ENCODE measurements at regions of chr4 and their contacts with region 1.

Region 1: GRCh38 chr4:3106339-3107186 is 32.1 kb downstream of the HTT start:
- DNase-seq: peak; percentile 96
- H3K4me3 Mint-ChIP-seq: no peak overlapping the region
- H3K27ac Mint-ChIP-seq: peak overlapping the region; percentile 7
- H3K4me1 Mint-ChIP-seq: peaks cover 13% of the 10 kb centered on the region
- H3K27me3 Mint-ChIP-seq: no peaks in the 10 kb centered on the region

Region 2: GRCh38 chr4:3047464-3048286 is 58.9 kb before region 1 on chr4:
- intact Hi-C with region 1: loop called (anchors 1 kb)
- DNase-seq: peak; percentile 95
- H3K4me3 Mint-ChIP-seq: peak overlapping the region; percentile 60
- H3K27ac Mint-ChIP-seq: peak overlapping the region; percentile 68
- H3K4me1 Mint-ChIP-seq: peaks cover 38% of the 10 kb centered on the region
- H3K27me3 Mint-ChIP-seq: peaks cover 10% of the 10 kb centered on the region

Region 3: DNA sequence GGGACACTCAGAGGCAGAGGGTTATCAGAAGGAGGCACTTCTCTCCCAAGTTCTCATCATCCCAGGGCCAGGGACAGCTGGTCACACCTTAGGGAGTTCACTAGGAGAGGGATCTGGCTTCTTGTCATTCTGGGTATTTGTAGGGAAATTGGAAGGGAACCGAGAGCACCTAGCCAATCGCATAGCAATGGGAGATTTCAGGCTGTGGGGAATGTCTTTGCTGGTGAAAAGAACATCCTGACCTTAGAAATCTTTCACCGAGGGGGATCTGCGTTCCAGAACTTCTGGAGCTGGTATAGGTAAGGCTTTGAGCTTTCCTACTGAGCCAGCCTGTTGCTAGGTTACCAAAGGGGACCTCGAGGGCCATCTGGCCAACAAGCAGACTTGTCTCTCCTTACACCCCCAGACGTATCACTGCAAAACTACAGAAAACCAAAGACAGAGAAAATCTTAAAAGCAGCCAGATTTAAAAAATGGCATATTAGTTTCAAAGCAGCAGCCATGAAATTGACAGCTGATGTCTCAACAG is 39.0 kb before region 1 on chr4:
- intact Hi-C with region 1: no loop called
- DNase-seq: no peak
- H3K4me3 Mint-ChIP-seq: no peak overlapping the region
- H3K27ac Mint-ChIP-seq: no peak overlapping the region
- H3K4me1 Mint-ChIP-seq: no peaks in the 10 kb centered on the region
- H3K27me3 Mint-ChIP-seq: peaks cover 7% of the 10 kb centered on the region

Region 4: GRCh38 chr4:3085948-3086655 is 20.5 kb before region 1 on chr4:
- intact Hi-C with region 1: loop called (anchors 1 kb)
- DNase-seq: no peak
- H3K4me3 Mint-ChIP-seq: no peak overlapping the region
- H3K27ac Mint-ChIP-seq: peak overlapping the region; percentile 70
- H3K4me1 Mint-ChIP-seq: peaks cover 44% of the 10 kb centered on the region
- H3K27me3 Mint-ChIP-seq: no peaks in the 10 kb centered on the region

Region 5: GRCh38 chr4:3096202-3096601 is 10.4 kb before region 1 on chr4:
- intact Hi-C with region 1: no loop called
- DNase-seq: no peak
- H3K4me3 Mint-ChIP-seq: no peak overlapping the region
- H3K27ac Mint-ChIP-seq: no peak overlapping the region
- H3K4me1 Mint-ChIP-seq: peaks cover 8% of the 10 kb centered on the region
- H3K27me3 Mint-ChIP-seq: no peaks in the 10 kb centered on the region

Region 6: GRCh38 chr4:3136453-3136852 is 29.9 kb after region 1 on chr4:
- intact Hi-C with region 1: loop called (anchors 1 kb)
- DNase-seq: no peak
- H3K4me3 Mint-ChIP-seq: no peak overlapping the region
- H3K27ac Mint-ChIP-seq: no peak overlapping the region
- H3K4me1 Mint-ChIP-seq: peaks cover 3% of the 10 kb centered on the region
- H3K27me3 Mint-ChIP-seq: no peaks in the 10 kb centered on the region

Region 7: DNA sequence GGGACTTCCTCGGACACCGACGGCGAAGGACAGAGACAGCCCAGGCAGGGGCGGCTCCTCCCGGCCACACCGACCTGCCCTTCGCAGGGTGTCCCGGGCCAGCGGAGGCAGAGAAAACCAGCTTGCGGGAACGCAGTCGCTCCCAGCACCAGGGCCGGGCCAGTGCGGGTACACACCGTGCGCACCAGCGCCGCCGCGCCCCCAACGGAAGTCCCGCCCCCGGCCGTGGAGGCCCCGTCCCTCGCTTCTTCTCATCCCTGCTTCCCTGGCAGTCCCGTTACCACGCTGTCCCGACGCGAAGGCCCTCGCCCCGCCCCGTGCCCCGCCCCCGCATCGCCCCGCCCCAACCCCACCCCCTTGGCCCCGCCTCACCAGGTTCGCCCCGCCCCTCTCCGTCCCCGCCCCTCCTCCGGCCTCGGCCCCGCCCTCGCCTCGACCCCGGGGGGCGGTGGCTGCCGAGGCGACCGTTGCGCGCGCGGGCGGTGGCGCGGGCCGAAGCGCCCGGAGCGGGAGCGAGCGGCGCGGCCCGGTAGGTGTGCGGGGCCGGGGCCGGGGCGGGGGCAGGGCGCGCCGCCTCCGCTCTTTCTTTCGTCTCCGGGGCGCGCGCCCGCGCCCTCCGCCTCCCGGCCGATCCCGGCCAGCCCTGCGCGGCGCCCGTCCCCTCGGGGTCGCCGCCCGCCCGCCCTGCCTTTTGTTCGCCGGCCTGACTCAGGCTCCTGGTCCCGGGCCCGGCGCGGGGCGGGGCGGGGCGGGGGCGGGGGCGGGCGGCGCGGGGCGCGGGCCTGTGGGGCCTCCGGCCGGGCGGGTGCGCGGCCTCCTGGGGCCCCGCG is 186.2 kb after region 1 on chr4 and contains the start of gene RGS12:
- intact Hi-C with region 1: loop called (anchors 10 kb)
- DNase-seq: peak; percentile 95
- H3K4me3 Mint-ChIP-seq: peak within 1 kb of the TSS; percentile 91
- H3K27ac Mint-ChIP-seq: peak within 1 kb of the TSS; percentile 77
- H3K4me1 Mint-ChIP-seq: peaks cover 13% of the 10 kb centered on the region
- H3K27me3 Mint-ChIP-seq: peaks cover 64% of the 10 kb centered on the region
- total RNA-seq, gene RGS12: 3.3 and 3.7 TPM in 2 replicates

Region 8: DNA sequence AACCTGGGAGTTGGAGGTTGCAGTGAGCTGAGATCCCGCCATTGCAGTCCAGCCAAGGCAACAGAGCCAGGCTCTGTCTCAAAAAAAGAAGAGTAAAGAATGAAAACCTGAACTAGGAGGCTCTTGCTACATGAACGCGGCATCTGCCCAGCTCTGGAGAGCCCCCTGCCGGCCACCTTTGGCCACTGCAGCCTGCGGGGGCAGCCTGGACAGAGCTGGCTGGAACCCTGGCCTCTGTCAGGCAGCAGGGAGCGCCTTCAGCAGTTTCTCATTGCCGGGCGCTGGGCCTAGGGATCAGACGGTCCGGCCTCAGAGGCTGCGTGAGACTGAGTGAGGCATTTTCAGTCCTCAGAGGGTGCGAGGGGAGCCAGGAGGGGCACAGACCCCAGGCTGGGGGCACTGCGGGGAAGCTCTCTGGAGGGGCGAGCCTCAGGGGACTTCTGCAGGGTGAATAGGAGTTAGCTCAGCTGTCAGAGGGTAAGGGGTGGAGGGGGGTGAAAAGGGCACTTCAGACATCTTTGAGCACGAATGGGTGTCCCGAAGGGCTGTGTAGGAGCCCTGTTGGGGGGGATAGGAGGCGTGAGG is 374.1 kb after region 1 on chr4:
- intact Hi-C with region 1: loop called (anchors 2 kb)
- DNase-seq: peak; percentile 94
- H3K4me3 Mint-ChIP-seq: no peak overlapping the region
- H3K27ac Mint-ChIP-seq: no peak overlapping the region
- H3K4me1 Mint-ChIP-seq: no peaks in the 10 kb centered on the region
- H3K27me3 Mint-ChIP-seq: peaks cover 14% of the 10 kb centered on the region